ENCODE measurements at regions of chr13 and their contacts with region 1.

Region 1: GRCh38 chr13:60163478-60164233 is at the start of gene DIAPH3:
- DNase-seq: peak; percentile 97
- ATAC-seq: peak; percentile 100
- total RNA-seq, gene DIAPH3: 0.46 TPM

Region 2: GRCh38 chr13:60061737-60062136 is 101.9 kb before region 1 on chr13:
- intact Hi-C with region 1: no loop called
- DNase-seq: no peak
- ATAC-seq: no peak

Region 3: DNA sequence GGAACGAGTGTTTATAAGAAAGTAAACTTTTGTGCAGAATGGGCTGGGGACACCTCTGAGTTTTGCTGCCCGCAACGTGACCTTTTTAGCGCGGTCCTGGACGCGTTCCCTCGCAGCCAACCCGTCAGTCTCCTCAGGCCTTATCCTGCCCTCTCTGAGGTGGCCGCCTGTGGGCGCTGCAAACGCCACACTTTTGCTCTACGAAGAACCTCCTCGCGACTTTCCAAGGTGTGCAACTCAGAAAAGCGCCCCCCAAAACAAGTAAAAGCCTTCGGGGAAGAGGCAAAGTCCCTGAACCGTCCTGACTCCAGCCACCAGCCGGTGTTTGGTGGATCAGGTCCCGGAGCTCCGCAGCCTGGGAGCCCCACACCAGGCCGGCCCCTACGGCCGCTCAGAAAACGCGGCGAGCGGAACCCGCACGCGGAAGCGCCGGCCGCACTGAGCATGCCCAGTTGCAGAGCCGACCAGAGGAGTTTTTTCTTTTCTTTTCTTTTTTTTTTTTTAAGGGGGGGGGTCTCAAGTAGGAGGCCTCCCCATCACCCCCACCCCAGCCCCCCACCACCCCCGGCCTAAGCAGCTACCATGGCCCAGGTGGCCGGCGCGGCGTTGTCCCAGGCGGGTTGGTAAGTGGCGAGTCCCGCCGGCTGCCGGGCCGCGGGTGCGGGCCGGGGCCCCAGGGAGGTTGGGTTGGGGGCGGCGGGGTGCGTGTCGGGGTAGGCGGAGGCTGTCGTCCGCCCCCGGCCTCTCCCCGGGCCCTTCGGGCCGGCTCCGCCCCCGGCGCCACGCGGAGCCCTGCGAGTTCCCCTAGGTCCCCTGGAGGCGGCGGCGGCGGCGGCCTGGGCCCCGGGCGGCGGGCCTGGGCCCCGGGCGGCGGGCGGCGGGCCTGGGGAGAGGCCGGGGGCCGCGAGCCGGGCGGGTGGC is 233.4 kb after region 1 on chr13 and contains the start of gene TDRD3:
- intact Hi-C with region 1: loop called (anchors 1 kb)
- DNase-seq: peak; percentile 90
- ATAC-seq: peak; percentile 87
- total RNA-seq, gene TDRD3: 40.2 TPM

Region 4: DNA sequence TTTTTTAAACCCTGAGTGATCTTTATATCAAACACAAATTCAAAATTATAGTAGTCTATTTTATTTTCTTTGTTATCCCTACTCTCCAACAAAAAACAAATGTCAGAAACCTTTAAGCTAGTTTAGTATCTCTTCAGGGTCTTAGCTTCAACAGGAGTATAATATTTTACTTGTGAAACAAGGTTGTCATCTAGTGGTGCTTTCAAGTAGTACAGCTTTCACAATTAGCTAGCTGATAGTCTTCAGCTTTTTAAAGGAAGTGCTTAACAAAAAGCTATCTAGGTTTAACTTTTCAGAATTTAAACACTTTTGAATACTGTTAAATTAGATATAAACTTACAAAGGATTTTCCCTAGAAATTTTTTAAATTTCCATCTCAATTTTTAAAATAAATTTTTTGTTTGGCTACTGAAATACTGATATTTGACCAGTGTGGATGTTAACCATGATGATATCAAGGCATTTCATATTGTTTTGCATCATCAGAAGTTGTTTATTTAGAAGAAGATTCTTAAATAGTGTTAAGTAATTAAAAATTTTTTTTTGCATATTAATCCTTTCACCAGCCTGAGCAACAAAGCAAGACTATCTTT is 267.5 kb after region 1 on chr13:
- intact Hi-C with region 1: loop called (anchors 10 kb)
- DNase-seq: no peak
- ATAC-seq: peak; percentile 62

Measured in Right ventricle myocardium inferior (tissue), 1 donor.